Activated CD8-positive, alpha-beta T cell treated with anti-CD3 and anti-CD28 coated beads, Interleukin-2, amount 10 ng/mL, durations not matched to agents 7 days and 5 days (primary cell): ENCODE measurements at regions of chr5 and their contacts with region 1.

Region 1: DNA sequence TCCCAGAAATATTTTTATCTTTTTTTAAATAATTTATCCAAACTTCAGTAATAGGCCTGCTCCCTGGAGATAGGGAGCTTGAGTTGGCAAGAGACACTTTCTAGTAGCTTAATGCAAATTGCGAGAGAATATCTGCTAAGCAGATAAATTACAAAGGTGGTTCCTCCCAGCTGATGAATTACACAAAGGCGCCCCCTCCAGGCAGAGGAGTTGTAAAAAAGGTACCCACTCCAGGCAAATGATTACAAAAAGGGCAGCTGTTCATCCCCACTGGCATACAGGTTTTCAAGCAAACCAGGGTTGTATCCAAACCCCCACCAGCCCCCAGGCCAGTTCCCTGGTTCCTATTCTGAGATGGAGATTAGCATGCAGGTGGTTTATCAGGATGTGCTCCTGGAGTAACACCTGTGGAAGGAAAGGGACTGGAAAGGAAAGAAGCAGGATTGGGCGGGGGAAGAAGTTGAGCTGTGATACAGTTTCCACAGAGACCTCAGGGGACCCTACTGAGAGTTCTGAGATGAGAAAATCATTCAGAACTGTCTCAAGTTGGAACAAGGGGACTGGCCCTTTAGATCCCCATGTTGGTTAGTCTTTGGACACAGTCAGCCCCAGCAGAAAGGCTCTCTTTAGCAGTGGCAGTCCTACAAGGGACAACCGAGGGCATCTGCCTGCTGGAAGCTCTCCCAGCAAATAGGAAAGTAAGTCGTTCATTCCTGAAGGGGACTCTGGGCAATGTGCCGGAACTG is 25.5 kb downstream of the ESM1 start:
- DNase-seq: peak; percentile 46
- ATAC-seq: no peak
- H3K4me3 Mint-ChIP-seq: no peak overlapping the region
- H3K27ac Mint-ChIP-seq: no peak overlapping the region
- H3K4me1 Mint-ChIP-seq: peaks cover 12% of the 10 kb centered on the region
- H3K27me3 Mint-ChIP-seq: peaks cover 13% of the 10 kb centered on the region

Region 2: GRCh38 chr5:54981928-54982327 is 22.1 kb after region 1 on chr5:
- CTCF ChIA-PET with region 1: interaction called, 16 read pairs
- POLR2A ChIA-PET with region 1: no interaction called
- DNase-seq: no peak
- ATAC-seq: no peak
- H3K4me3 Mint-ChIP-seq: no peak overlapping the region
- H3K27ac Mint-ChIP-seq: no peak overlapping the region
- H3K4me1 Mint-ChIP-seq: peaks cover 34% of the 10 kb centered on the region
- H3K27me3 Mint-ChIP-seq: peaks cover 24% of the 10 kb centered on the region